ENCODE measurements at regions of chr5 and their contacts with region 1.

Region 1: GRCh38 chr5:169583424-169584204 is at the start of gene SPDL1:
- DNase-seq: peak; percentile 75
- H3K4me3 ChIP-seq: peak within 1 kb of the TSS; percentile 86
- CTCF ChIP-seq: no peak

Region 2: GRCh38 chr5:168679515-168679920 is 904.1 kb before region 1 on chr5:
- CTCF ChIA-PET with region 1: interaction called, 41 read pairs
- POLR2A ChIA-PET with region 1: no interaction called
- DNase-seq: peak; percentile 14
- H3K4me3 ChIP-seq: no peak overlapping the region
- CTCF ChIP-seq: peak; percentile 79

Region 3: GRCh38 chr5:168947212-168947868 is 636.3 kb before region 1 on chr5:
- CTCF ChIA-PET with region 1: interaction called, 60 read pairs
- POLR2A ChIA-PET with region 1: no interaction called
- DNase-seq: no peak
- H3K4me3 ChIP-seq: no peak overlapping the region
- CTCF ChIP-seq: peak; percentile 94

Region 4: DNA sequence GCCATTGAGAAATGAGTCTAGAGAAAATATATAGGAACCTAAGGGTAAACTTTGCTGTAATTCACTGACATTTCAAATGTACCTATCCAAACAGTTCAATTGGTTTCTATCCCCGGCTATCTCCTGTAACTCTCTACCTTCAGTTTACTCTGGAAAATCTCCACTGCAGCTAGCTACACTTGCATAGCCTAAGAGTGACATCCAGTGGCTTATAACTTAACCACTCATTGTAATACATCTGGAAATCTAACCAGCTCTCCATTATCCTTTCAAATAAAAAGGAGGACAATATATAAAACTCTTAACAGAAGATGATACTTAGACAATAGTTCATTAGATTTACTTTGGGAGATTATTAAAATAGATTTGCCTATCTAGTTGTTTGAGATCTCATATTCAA is 35.3 kb before region 1 on chr5:
- CTCF ChIA-PET with region 1: interaction called, 14 read pairs
- POLR2A ChIA-PET with region 1: no interaction called
- DNase-seq: no peak
- H3K4me3 ChIP-seq: no peak overlapping the region
- CTCF ChIP-seq: peak; percentile 32

Region 5: GRCh38 chr5:169695919-169696490 is 112.4 kb after region 1 on chr5:
- CTCF ChIA-PET with region 1: no interaction called
- POLR2A ChIA-PET with region 1: interaction called, 19 read pairs
- DNase-seq: peak; percentile 98
- H3K4me3 ChIP-seq: no peak overlapping the region
- CTCF ChIP-seq: no peak

Region 6: GRCh38 chr5:169934990-169935389 is 351.4 kb after region 1 on chr5:
- CTCF ChIA-PET with region 1: no interaction called
- POLR2A ChIA-PET with region 1: no interaction called
- DNase-seq: no peak
- H3K4me3 ChIP-seq: no peak overlapping the region
- CTCF ChIP-seq: no peak

Measured in AG04449 (cell line).